Left colon (tissue), 2 donors: ENCODE measurements at regions of chr11 and their contacts with region 1.

Region 1: GRCh38 chr11:19742588-19743292 is 30.1 kb downstream of the NAV2 start:
- DNase-seq: peak; percentile 63 to 77
- ATAC-seq: peak; percentile 96

Region 2: DNA sequence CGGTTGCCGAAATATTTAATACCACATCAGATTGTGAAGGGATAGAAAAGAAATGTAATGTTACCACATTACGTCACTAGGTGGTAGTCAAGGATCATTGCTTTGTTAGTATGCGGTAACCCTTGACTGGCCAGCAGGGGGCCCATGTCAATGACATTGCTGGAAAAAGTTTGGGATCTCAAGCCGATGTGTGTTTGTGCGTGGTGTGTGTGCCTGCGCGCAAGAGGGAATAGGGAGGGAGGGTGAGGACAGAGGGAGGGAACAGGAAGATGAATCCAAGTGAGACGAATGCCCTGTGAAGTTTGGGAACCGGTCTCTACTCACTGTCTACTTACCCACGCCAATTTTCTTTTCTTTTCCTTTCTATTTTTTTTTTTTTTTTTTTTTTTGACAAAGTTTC is 671.5 kb before region 1 on chr11:
- intact Hi-C with region 1: loop called in 1 of 2 experiments (anchors 10 kb)
- DNase-seq: peak; percentile 70 to 76
- ATAC-seq: peak; percentile 70

Region 3: GRCh38 chr11:19561011-19561410 is 181.7 kb before region 1 on chr11:
- intact Hi-C with region 1: loop called (anchors 5 to 10 kb)
- DNase-seq: no peak
- ATAC-seq: no peak

Region 4: DNA sequence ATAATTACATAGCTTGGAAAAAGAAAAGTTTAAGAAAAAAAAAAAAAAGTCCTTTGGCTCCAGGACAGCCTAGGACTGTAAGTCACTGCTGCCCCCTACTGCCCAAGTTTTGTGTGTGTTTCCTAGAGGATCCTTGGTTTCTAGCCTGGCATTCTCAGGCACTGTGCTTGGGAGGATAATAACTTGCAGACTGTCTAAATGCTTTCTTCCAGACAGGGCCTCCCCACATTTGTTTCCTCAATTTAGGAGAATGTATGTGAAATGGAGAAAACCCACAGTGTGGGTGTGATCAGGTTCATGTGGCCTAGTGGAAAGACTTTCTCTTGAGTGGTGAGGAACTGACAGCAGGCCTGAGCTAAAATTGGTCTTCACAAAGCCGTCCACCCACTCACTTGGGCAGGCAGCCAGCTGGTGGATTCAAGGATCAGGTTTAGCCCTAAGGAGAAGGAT is 160.9 kb after region 1 on chr11:
- intact Hi-C with region 1: loop called in 1 of 2 experiments (anchors 10 kb)
- DNase-seq: peak; percentile 55 to 87
- ATAC-seq: peak; percentile 84